Activated CD4-positive, alpha-beta memory T cell treated with anti-CD3 and anti-CD28 coated beads for 36 hours (primary cell): ENCODE measurements at regions of chr2 and their contacts with region 1.

Region 1: GRCh38 chr2:144320491-144320890 is 199.4 kb downstream of the ZEB2 start:
- DNase-seq: peak; percentile 70
- H3K4me3 Mint-ChIP-seq: peak overlapping the region; percentile 3
- H3K27ac Mint-ChIP-seq: peak overlapping the region; percentile 66
- H3K4me1 Mint-ChIP-seq: peaks cover 49% of the 10 kb centered on the region
- H3K27me3 Mint-ChIP-seq: no peaks in the 10 kb centered on the region

Region 2: GRCh38 chr2:144128130-144128746 is 192.3 kb before region 1 on chr2:
- CTCF ChIA-PET with region 1: no interaction called
- POLR2A ChIA-PET with region 1: no interaction called
- intact Hi-C with region 1: loop called (anchors 1 kb)
- DNase-seq: no peak
- H3K4me3 Mint-ChIP-seq: no peak overlapping the region
- H3K27ac Mint-ChIP-seq: peak overlapping the region; percentile 24
- H3K4me1 Mint-ChIP-seq: peaks cover 28% of the 10 kb centered on the region
- H3K27me3 Mint-ChIP-seq: no peaks in the 10 kb centered on the region

Region 3: GRCh38 chr2:144230448-144231085 is 89.9 kb before region 1 on chr2:
- CTCF ChIA-PET with region 1: no interaction called
- POLR2A ChIA-PET with region 1: no interaction called
- intact Hi-C with region 1: loop called (anchors 10 kb)
- DNase-seq: no peak
- H3K4me3 Mint-ChIP-seq: no peak overlapping the region
- H3K27ac Mint-ChIP-seq: no peak overlapping the region
- H3K4me1 Mint-ChIP-seq: peaks cover 41% of the 10 kb centered on the region
- H3K27me3 Mint-ChIP-seq: no peaks in the 10 kb centered on the region

Region 4: GRCh38 chr2:144332356-144333142 is 12.1 kb after region 1 on chr2:
- CTCF ChIA-PET with region 1: no interaction called
- POLR2A ChIA-PET with region 1: interaction called, 5 read pairs
- intact Hi-C with region 1: loop called (anchors 1 kb)
- DNase-seq: peak; percentile 92
- H3K4me3 Mint-ChIP-seq: peak overlapping the region; percentile 91
- H3K27ac Mint-ChIP-seq: peak overlapping the region; percentile 96
- H3K4me1 Mint-ChIP-seq: peaks cover 33% of the 10 kb centered on the region
- H3K27me3 Mint-ChIP-seq: no peaks in the 10 kb centered on the region

Region 5: DNA sequence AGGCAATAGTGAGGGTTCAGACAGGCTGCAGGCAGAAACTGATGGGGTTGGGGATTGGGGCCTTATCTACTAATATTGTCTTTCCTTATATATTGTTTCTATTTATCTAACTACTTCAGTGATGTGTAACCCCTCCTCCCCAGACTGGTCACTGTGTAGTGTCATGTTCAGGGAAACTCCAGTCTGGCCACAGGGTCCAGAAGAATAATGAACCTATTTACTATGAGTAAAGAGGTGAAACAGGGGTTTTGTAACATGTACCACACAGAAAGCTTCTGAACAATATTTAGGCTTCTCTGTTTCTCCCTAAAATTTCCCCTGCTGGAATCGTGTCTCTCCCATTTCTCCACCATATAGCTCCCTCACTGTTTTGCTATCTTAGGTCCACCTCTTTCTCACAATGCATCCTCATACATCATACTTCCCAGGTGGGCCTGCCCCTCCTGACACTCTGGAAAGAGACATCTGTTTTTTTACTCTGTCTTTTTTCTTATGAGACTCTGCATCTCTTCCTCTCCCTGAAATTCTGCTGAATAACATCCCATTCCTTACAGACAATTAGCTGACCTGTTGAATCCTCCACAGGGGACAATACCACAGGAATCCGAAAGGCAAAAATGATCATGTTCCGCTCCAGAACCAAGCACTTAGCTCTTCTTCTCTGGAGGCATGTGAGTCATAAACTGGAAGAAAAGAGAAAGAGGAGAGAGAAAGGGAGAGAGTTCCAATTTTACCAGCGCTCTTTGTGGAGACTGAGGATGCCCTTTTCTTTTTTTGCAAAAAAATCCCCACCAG is 44.6 kb after region 1 on chr2:
- CTCF ChIA-PET with region 1: no interaction called
- POLR2A ChIA-PET with region 1: no interaction called
- intact Hi-C with region 1: no loop called
- DNase-seq: no peak
- H3K4me3 Mint-ChIP-seq: no peak overlapping the region
- H3K27ac Mint-ChIP-seq: no peak overlapping the region
- H3K4me1 Mint-ChIP-seq: peaks cover 2% of the 10 kb centered on the region
- H3K27me3 Mint-ChIP-seq: peaks cover 3% of the 10 kb centered on the region

Region 6: DNA sequence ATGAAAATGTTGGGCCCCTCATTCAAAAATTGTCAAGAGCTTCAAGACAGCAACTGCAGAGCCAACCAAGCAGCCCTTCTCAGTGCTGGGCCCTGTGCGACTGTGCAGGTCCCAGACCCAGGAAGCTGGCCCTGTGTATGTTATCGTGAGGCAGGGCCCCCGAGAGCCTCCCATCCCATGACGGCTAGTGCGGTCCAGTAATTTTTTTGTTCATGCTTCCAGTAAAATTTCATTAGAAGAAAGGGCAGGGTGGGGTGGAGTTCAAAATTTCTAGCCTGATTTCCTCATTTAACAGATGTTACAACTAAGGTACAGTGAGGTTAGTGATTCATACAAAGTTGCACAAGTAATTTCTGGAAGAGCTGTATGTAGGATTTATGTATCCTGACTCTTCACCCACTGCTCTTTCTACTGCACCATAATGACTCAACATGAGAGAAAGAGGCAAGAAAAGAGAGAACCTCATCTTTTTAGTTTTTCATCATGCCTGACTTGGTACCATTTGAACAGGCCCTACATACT is 93.9 kb after region 1 on chr2:
- CTCF ChIA-PET with region 1: no interaction called
- POLR2A ChIA-PET with region 1: no interaction called
- intact Hi-C with region 1: loop called (anchors 1 kb)
- DNase-seq: peak; percentile 40
- H3K4me3 Mint-ChIP-seq: no peak overlapping the region
- H3K27ac Mint-ChIP-seq: peak overlapping the region; percentile 66
- H3K4me1 Mint-ChIP-seq: peaks cover 24% of the 10 kb centered on the region
- H3K27me3 Mint-ChIP-seq: no peaks in the 10 kb centered on the region

Region 7: DNA sequence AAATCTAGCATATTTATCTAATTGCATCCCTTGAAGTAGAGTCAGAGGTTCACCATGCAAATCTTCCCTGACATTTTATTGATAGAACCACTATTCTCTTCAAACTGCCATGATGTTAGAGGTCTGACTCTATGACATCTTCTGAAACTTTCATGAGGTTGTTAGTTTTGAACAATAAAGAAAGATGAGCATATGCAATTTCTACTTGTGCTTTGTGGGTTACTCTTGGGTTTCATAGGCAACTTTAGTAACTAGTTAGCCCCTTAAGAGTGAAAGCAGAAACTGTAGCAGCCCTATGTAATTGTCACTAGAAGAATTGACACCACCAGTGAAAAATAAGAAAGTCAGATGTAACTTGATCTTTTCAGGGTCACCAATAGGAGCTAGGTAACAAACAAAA is 252.5 kb after region 1 on chr2:
- CTCF ChIA-PET with region 1: no interaction called
- POLR2A ChIA-PET with region 1: no interaction called
- intact Hi-C with region 1: loop called (anchors 2 kb)
- DNase-seq: no peak
- H3K4me3 Mint-ChIP-seq: no peak overlapping the region
- H3K27ac Mint-ChIP-seq: no peak overlapping the region
- H3K4me1 Mint-ChIP-seq: peaks cover 23% of the 10 kb centered on the region
- H3K27me3 Mint-ChIP-seq: peaks cover 6% of the 10 kb centered on the region